T-cell (primary cell): ENCODE measurements at regions of chr9 and their contacts with region 1.

Region 1: DNA sequence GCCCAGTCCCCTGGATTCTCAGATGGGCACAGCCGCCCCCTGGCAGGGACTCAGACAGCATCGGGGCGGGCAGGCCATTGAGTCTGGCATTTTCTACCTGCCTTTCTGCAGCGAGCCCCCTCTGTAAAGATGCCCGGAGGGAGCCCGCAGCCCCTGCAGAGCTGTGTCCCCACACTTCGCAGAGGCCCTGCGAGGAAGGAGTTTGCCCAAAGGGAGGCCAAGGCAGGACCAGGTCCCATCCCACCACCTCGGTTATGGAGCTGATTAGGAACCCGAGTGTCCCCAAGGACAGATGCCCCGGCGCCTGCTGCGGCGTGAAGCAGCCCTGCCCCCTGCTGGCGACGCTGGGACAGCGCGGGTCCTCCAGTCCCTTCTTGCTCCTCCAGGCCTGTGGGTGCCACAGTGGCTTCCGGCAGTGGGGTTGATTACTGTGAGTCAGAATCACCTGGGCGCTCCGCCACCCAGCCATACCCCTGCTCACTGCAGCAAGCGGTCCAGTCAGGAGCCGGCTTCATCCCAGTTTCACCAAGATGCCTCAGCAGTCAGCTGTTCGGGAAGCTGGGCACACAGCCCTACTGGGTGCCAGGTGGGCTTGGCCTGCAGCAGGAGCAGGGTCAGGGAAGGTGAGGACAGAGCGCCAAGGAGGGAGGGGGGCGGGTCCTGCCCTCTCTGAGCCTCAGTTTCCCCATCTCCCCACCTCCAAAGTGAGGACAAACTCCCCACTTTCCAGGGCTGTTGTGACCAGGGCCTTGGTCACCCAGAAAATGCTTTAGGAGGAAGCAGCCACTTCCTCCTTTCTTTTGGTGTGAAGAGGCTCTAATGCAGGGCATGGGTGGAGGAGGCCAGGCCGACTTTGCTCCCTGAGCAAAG is 117.1 kb downstream of the RXRA start:
- DNase-seq: peak; percentile 73 to 93 (median 84)
- ATAC-seq: peak; percentile 98 to 100 (median 100)
- H3K4me3 ChIP-seq: no peak overlapping the region
- H3K4me3 Mint-ChIP-seq: no peak overlapping the region
- H3K27ac ChIP-seq: peak overlapping the region; percentile 60
- H3K27ac Mint-ChIP-seq: peak overlapping the region; percentile 46 to 49
- H3K4me1 ChIP-seq: peaks cover 12 to 23% of the 10 kb centered on the region in 2 experiments
- H3K4me1 Mint-ChIP-seq: peaks cover 8 to 21% (median 11%) of the 10 kb centered on the region in 3 donors
- H3K27me3 ChIP-seq: peaks cover 0 to 41% of the 10 kb centered on the region in 2 experiments
- H3K27me3 Mint-ChIP-seq: peaks cover 0 to 4% of the 10 kb centered on the region in 2 donors

Region 2: GRCh38 chr9:134171316-134172197 is 271.8 kb before region 1 on chr9:
- CTCF ChIA-PET with region 1: interaction called, 10 read pairs
- POLR2A ChIA-PET with region 1: no interaction called
- DNase-seq: no peak
- ATAC-seq: no peak
- H3K4me3 ChIP-seq: no peak overlapping the region
- H3K4me3 Mint-ChIP-seq: no peak overlapping the region
- H3K27ac ChIP-seq: no peak overlapping the region
- H3K27ac Mint-ChIP-seq: no peak overlapping the region
- H3K4me1 ChIP-seq: no peaks in the 10 kb centered on the region
- H3K4me1 Mint-ChIP-seq: peaks cover 0 to 5% (median under 1%) of the 10 kb centered on the region in 3 donors
- H3K27me3 ChIP-seq: peaks cover 0 to 6% of the 10 kb centered on the region in 2 experiments
- H3K27me3 Mint-ChIP-seq: peaks cover 2 to 3% of the 10 kb centered on the region in 2 donors

Region 3: DNA sequence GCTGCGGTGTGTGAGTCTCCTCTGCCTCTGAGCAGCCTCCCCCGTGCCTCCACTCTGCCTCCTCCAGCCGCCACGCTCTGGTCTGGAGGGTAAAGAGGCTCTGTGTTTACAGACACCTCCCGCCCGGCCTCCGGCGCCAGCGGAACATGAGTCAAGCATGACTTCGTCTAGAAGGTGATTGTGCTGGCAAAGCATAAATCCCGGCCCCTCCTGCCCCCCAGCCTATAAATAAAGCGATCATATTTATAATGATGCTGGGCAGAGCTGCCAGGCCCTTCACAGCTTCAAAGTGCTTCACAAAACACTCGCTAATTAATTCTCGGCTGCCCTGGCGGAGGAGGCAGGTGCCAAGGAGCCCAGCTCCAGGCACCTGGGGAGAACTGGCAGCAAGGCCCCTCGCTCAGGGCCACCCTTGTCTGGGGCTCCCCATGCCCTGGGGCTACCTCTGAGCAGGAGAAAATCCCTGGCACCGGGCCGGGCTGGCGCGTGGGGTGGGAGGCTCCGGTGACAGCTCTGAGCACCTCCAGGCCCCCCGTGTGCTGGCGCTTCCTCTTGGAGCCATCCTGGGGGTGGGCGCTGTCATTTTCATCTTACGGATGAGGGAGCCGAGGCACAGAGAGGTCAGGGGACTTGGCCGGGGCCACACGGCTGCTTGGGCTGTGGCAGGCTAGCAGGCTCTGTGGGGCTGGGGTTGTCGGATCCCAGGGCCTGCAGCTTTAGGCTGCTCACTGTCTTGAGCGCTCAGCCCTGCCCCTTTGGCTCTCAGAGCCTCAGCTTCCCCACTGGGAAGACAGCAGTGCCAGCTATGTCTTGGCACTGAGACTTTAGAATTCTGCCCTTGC is 29.3 kb before region 1 on chr9:
- CTCF ChIA-PET with region 1: no interaction called
- POLR2A ChIA-PET with region 1: no interaction called
- DNase-seq: no peak
- ATAC-seq: no peak
- H3K4me3 ChIP-seq: no peak overlapping the region
- H3K4me3 Mint-ChIP-seq: no peak overlapping the region
- H3K27ac ChIP-seq: no peak overlapping the region
- H3K27ac Mint-ChIP-seq: no peak overlapping the region
- H3K4me1 ChIP-seq: peaks cover 0 to 12% of the 10 kb centered on the region in 2 experiments
- H3K4me1 Mint-ChIP-seq: peaks cover 8 to 9% (median 8%) of the 10 kb centered on the region in 3 donors
- H3K27me3 ChIP-seq: no peaks in the 10 kb centered on the region
- H3K27me3 Mint-ChIP-seq: no peaks in the 10 kb centered on the region